Tibial artery (tissue), 4 donors: ENCODE measurements at regions of chr10 and their contacts with region 1.

Region 1: GRCh38 chr10:69639291-69640195 is 9.5 kb downstream of the FAM241B start:
- DNase-seq: peak; percentile 51 to 63
- H3K4me3 ChIP-seq: no peak overlapping the region
- H3K27ac ChIP-seq: no peak overlapping the region
- H3K4me1 ChIP-seq: peaks cover 0 to under 1% (median under 1%) of the 10 kb centered on the region in 4 donors
- H3K27me3 ChIP-seq: peaks cover 0 to 5% of the 10 kb centered on the region in 2 donors
- CTCF ChIP-seq: peak; percentile 84 to 85

Region 2: DNA sequence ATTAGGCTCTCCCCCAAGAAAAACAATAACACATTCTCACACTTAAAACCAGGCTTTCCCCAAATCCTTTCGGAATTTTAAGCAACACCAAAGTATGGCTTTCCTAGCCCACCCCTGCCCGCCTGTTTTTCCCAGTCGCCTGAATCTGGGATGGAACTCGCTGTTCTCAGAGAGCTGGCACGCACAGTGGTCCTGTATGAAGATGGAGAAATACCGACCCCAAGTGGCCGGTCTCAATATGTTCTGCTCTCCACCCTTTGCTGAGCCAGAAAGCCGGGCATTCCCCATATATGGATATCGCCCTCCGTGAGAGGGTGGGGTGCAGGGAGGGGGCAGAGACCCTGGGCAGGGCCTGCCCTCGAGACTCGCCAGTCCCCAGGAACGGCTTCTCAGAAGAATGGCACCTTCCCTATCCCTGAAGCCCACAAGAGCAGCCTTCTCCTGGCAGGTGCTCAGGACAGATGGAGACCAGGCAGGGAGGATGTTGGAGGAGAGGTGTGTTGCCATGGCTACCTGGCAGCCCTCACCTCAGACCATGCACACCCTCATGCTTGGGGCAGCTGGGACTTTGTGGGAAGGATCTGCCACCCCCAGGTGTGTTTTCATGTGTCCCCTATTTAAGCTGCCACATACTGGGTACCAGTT is 226.2 kb before region 1 on chr10:
- intact Hi-C with region 1: loop called (anchors 10 kb)
- DNase-seq: peak; percentile 87 to 88
- H3K4me3 ChIP-seq: no peak overlapping the region
- H3K27ac ChIP-seq: peak overlapping the region; percentile 56 to 64
- H3K4me1 ChIP-seq: peaks cover 2 to 25% (median 16%) of the 10 kb centered on the region in 4 donors
- H3K27me3 ChIP-seq: no peaks in the 10 kb centered on the region
- CTCF ChIP-seq: peak; percentile 66 to 73

Region 3: DNA sequence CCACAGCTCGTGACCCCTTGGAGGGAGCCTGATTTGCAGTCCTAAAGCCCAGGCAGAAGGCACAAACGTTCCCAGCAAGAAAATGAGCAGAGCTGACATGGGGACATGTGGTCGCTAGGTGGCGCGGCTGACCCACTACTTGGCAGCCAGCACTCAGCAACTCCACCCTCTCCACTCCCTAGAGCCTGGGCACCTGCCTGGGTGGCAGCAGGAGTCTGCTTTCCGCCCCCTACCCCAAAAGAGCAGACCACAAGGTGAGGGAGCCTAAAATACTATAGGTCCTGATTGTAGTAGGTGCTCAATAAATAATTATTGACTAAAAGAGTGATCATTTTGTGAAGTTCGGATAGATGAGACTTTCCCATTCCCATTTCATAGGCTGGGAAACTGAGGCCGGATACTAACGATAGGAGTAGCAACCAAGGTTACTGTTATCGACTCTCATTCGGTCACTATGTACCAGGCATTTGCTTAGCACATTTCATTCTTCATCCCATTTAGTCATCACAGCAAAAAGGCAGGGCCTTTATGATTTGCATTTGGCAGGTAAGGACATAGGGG is 123.8 kb before region 1 on chr10:
- intact Hi-C with region 1: loop called (anchors 5 kb)
- DNase-seq: peak; percentile 65 to 70
- H3K4me3 ChIP-seq: no peak overlapping the region
- H3K27ac ChIP-seq: no peak overlapping the region
- H3K4me1 ChIP-seq: no peaks in the 10 kb centered on the region
- H3K27me3 ChIP-seq: no peaks in the 10 kb centered on the region
- CTCF ChIP-seq: peak; percentile 67 to 70

Region 4: GRCh38 chr10:69742928-69743602 is 103.5 kb after region 1 on chr10:
- intact Hi-C with region 1: no loop called
- DNase-seq: no peak
- H3K4me3 ChIP-seq: no peak overlapping the region
- H3K27ac ChIP-seq: no peak overlapping the region
- H3K4me1 ChIP-seq: peaks cover 0 to 29% (median 17%) of the 10 kb centered on the region in 4 donors
- H3K27me3 ChIP-seq: no peaks in the 10 kb centered on the region
- CTCF ChIP-seq: peak; percentile 30 to 36

Region 5: GRCh38 chr10:69839696-69840345 is 200.3 kb after region 1 on chr10:
- intact Hi-C with region 1: no loop called
- DNase-seq: no peak
- H3K4me3 ChIP-seq: no peak overlapping the region
- H3K27ac ChIP-seq: no peak overlapping the region
- H3K4me1 ChIP-seq: peaks cover 0 to 8% (median 4%) of the 10 kb centered on the region in 4 donors
- H3K27me3 ChIP-seq: no peaks in the 10 kb centered on the region
- CTCF ChIP-seq: no peak

Region 6: DNA sequence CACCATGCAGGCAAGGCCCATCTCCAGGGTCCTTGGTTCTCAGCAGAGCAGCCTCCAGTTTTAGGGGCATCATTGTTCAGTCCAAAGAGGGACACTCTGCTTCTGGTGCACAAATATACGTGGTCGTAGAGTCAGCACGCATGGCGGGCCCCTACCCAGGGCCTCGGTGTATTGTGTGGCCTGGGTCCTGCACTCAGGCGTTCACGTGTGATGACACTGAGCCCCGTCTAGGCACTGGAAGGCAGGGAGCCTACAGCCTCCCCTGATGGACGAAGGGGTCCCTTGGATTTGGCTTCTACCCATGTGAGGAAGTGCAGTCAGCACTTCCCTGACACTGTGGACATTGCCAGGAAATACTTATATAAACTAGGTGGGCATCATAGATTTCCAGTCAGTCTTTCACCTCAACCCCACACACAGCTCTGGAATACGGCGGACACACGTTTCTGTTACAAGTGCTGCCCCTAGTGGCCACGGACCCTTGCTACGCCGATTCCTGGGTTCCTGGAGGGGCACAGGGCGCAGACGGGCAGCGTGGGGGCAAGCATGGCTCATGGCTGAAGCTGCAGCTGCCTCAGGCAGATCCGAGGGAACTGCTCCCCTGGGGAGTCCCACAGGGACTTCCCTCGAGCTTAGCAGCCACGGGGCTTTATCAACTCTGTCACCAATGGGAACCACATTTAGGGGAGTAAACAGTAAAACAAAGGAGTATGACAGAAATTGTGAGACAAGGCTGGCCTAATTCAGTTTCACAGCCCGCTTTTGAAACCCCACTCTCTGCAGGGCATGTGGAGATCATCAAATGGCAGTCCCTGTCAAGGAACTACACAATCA is 467.6 kb after region 1 on chr10:
- intact Hi-C with region 1: no loop called
- DNase-seq: no peak
- H3K4me3 ChIP-seq: no peak overlapping the region
- H3K27ac ChIP-seq: no peak overlapping the region
- H3K4me1 ChIP-seq: no peaks in the 10 kb centered on the region
- H3K27me3 ChIP-seq: no peaks in the 10 kb centered on the region
- CTCF ChIP-seq: peak in 1 of 2 experiments; percentile 24